ENCODE measurements at regions of chr1 and their contacts with region 1.

Region 1: DNA sequence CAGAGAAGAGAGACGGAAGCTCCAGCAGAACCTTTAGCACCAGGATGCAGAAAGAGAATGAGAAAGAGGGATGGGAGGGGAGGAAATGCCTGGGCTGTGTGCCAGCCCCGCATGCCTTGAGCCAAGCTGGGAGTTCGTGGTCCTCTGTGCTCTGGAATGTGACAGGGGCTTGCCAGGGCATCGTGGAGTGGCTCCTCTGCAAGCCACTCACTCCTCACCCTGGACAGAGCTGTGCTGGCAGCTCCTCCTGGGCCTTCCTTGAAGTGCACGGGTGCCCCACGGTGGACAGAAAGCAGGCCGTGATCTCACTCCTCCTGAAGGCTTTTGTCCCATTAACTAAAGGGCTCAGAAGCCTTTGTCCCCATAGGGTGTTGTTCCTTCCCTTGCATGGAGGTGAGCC is 34.8 kb upstream of the PRELP start:
- DNase-seq: peak; percentile 47 to 72
- ATAC-seq: peak; percentile 43 to 69
- H3K4me3 ChIP-seq: no peak overlapping the region
- H3K27ac ChIP-seq: no peak overlapping the region
- H3K4me1 ChIP-seq: no peaks in the 10 kb centered on the region
- H3K27me3 ChIP-seq: no peaks in the 10 kb centered on the region
- CTCF ChIP-seq: peak in 3 of 5 experiments; percentile 34 to 52 (median 44)
- POLR2A ChIP-seq: no peak

Region 2: DNA sequence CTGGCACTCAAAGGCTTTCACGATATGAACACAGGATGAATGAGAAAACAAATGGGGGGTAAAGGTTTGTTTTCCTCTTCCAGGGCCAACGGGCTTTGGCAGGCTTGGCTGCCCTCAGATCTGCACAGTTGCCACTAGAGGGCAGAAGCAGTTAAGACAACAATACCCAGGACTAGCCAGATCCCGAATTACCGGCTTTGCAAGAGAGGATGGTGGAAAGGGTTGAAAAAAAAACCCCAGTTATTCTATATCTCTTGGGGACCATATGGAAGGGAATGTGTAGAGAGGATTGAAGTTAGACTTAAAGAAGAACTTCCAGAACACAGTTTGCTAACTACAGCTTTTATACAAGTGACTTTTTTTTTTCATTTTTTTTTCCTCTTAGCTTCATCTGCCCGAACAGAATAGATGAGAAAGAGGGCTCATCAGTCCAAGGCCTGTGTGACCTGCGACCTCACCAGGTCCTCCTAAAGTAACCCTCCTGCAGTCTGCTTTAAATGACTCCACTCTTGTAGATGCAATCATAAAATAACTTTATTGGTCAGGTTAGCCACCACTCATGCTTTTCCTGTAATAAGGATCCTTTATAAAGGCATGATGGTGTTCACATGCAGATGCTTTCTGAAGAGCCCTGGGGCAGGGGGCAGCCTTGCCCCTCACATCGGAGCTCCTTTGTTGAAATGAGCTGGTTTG is 100.5 kb before region 1 on chr1:
- in situ Hi-C with region 1: no loop called
- intact Hi-C with region 1: loop called (anchors 5 kb)
- DNase-seq: peak; percentile 63 to 67
- ATAC-seq: peak; percentile 53 to 65
- H3K4me3 ChIP-seq: no peak overlapping the region
- H3K27ac ChIP-seq: peak overlapping the region; percentile 0 to 71 (median 26)
- H3K4me1 ChIP-seq: peaks cover 28 to 37% of the 10 kb centered on the region in 2 donors
- H3K27me3 ChIP-seq: no peaks in the 10 kb centered on the region
- CTCF ChIP-seq: peak; percentile 71 to 89 (median 87)
- POLR2A ChIP-seq: no peak

Region 3: DNA sequence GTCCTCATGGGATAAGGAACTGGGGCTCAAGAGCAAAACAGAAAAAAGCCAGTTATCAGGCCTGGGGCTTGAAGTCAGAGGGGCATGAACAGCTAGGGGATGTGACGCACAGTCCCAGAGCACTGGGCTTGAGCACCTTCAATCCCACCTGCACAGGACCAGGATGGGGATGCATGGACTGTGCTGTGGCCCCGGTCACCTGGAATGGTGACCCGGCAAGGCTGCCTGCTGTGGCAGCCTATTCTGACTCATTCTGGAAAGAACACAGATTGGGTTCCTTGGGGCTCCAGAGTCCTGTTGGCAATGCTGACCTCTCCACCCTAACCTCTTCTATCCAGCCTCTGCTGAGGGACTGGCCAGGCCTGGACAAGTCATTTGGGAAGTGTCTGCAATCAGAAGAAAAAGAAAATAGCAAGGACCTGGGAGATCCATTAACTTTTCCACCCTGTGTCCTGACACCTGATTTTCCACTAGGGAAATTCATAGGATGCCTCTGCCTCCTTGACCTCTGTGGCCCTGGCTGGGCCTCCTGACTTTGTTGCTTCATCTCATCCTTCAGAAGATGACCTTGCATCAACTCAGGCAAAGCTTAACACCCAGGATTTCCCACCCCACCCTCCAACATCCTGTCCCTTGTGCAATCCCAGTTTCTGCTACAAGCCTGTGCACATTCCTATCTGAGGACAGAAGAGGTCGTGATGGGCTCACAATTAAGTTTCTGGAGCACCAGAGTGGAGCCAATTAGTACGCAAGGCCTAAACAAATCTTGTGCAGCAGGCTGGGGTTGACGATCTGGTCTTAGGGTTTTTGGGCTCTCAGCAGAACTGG is 71.9 kb before region 1 on chr1:
- in situ Hi-C with region 1: loop called in 1 of 4 experiments (anchors 10 kb)
- intact Hi-C with region 1: loop called (anchors 2 kb)
- DNase-seq: peak; percentile 75 to 83
- ATAC-seq: peak; percentile 89 to 91
- H3K4me3 ChIP-seq: no peak overlapping the region
- H3K27ac ChIP-seq: peak overlapping the region; percentile 37 to 59 (median 48)
- H3K4me1 ChIP-seq: peaks cover 0 to 7% of the 10 kb centered on the region in 2 donors
- H3K27me3 ChIP-seq: no peaks in the 10 kb centered on the region
- CTCF ChIP-seq: peak in 2 of 5 experiments; percentile 3 to 17
- POLR2A ChIP-seq: no peak

Region 4: GRCh38 chr1:203408486-203409427 is 32.0 kb before region 1 on chr1:
- in situ Hi-C with region 1: no loop called
- intact Hi-C with region 1: loop called (anchors 5 kb)
- DNase-seq: peak; percentile 70 to 81
- ATAC-seq: peak; percentile 86 to 88
- H3K4me3 ChIP-seq: no peak overlapping the region
- H3K27ac ChIP-seq: peak overlapping the region; percentile 17 to 49 (median 26)
- H3K4me1 ChIP-seq: peaks cover 0 to 4% of the 10 kb centered on the region in 2 donors
- H3K27me3 ChIP-seq: peaks cover 0 to 5% (median 4%) of the 10 kb centered on the region in 3 donors
- CTCF ChIP-seq: no peak
- POLR2A ChIP-seq: peak in 1 of 2 donors; percentile 24

Region 5: DNA sequence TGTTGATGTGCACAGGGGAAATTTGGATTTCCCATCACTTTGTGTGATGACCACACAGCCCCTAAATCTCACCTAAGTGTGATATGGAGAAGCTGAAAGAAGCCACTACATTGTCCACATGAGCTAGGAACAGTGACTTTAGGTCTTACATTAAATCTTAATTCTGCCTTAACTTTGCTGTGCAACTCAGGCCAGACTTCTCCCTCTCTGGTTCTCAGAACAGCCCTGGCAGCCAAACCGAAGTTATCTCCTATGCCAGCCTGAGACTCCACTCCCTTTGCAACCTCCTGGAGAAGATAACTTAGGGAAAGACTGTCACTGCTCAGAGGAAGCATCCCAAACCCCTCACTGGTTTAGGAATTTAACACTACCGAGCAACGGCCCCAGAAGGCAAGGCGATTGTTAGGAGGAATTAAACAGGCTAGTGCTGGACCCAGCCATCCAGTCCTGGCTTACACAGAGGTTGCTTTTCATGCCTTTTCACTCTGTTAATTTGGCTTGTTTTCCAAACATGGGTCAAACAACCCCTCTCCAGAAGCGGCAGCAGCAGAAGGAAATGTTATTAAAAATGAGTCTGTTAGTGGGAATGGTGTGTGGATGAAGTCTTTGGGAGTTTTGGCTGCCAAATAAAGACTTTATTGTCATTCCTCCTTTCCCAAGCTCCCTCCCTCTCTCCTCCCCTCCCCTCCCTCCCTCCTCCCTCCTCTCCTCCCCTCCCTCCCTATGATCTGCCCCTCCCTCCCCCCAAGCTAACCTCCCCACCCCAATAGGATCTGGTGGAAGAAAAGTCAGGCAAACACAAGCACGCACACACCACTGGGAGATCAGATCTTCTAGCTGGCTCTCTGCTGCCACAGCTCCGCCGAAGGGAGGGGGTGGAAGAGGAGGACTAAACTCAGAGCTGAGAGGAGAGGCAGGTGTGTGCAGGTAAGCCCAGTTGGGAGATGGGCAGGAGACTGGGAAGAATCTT is 34.5 kb after region 1 on chr1 and contains the start of gene PRELP:
- in situ Hi-C with region 1: no loop called
- intact Hi-C with region 1: no loop called
- DNase-seq: peak; percentile 56 to 67
- ATAC-seq: peak; percentile 60 to 64
- H3K4me3 ChIP-seq: peak within 1 kb of the TSS; percentile 35 to 51 (median 42)
- H3K27ac ChIP-seq: peak within 1 kb of the TSS; percentile 67 to 77 (median 73)
- H3K4me1 ChIP-seq: no peaks in the 10 kb centered on the region
- H3K27me3 ChIP-seq: no peaks in the 10 kb centered on the region
- CTCF ChIP-seq: no peak
- POLR2A ChIP-seq: peak in 1 of 2 donors; percentile 50
- total RNA-seq, gene PRELP: 12.2 to 32.6 (median 16.9) TPM

Region 6: GRCh38 chr1:203486618-203487370 is 46.0 kb after region 1 on chr1:
- in situ Hi-C with region 1: no loop called
- intact Hi-C with region 1: loop called (anchors 5 kb)
- DNase-seq: no peak
- ATAC-seq: peak; percentile 26 to 32
- H3K4me3 ChIP-seq: peak overlapping the region; percentile 33 to 87 (median 56)
- H3K27ac ChIP-seq: peak overlapping the region; percentile 60 to 75 (median 70)
- H3K4me1 ChIP-seq: no peaks in the 10 kb centered on the region
- H3K27me3 ChIP-seq: no peaks in the 10 kb centered on the region
- CTCF ChIP-seq: no peak
- POLR2A ChIP-seq: no peak